Left ventricle myocardium inferior (tissue), 1 donor: ENCODE measurements at regions of chr4 and their contacts with region 1.

Region 1: GRCh38 chr4:71229477-71230270 is 109.1 kb upstream of the SLC4A4 start:
- DNase-seq: no peak
- H3K4me3 ChIP-seq: peak overlapping the region; percentile 26
- H3K27ac ChIP-seq: peak overlapping the region; percentile 88
- H3K4me1 ChIP-seq: peaks cover 55% of the 10 kb centered on the region
- H3K27me3 ChIP-seq: peaks cover 4% of the 10 kb centered on the region
- CTCF ChIP-seq: peak; percentile 80

Region 2: GRCh38 chr4:71540749-71541269 is 311.1 kb after region 1 on chr4:
- intact Hi-C with region 1: loop called (anchors 10 kb)
- DNase-seq: no peak
- H3K4me3 ChIP-seq: no peak overlapping the region
- H3K27ac ChIP-seq: no peak overlapping the region
- H3K4me1 ChIP-seq: peaks cover 15% of the 10 kb centered on the region
- H3K27me3 ChIP-seq: no peaks in the 10 kb centered on the region
- CTCF ChIP-seq: no peak